ENCODE measurements at regions of chr11 and their contacts with region 1.

Region 1: DNA sequence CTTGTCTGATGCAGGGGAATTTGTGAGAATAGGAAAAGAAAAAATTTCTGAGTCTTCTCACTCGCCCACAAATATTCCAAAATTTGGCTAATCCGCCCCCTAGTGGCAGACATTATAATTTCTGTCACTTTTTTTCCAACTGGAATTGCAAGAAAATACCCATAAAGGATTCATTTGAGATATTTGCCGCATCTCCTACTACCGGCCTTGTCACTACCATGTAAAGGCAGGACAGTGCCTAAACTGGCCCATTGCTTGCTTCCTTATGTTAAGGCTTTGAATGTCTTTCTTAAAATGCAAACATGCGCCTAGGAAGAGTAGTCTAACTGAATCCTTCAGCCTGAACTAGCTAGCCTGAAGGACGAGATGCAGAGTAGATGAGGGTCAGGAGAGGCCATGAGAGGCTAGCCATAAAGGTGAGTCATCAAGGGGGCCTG is 9.3 kb upstream of the CEP295 start:
- DNase-seq: no peak
- ATAC-seq: peak in 1 of 2 donors; percentile 11
- H3K4me3 ChIP-seq: no peak overlapping the region
- H3K27ac ChIP-seq: no peak overlapping the region
- H3K4me1 ChIP-seq: no peaks in the 10 kb centered on the region
- H3K27me3 ChIP-seq: peaks cover 3% of the 10 kb centered on the region

Region 2: DNA sequence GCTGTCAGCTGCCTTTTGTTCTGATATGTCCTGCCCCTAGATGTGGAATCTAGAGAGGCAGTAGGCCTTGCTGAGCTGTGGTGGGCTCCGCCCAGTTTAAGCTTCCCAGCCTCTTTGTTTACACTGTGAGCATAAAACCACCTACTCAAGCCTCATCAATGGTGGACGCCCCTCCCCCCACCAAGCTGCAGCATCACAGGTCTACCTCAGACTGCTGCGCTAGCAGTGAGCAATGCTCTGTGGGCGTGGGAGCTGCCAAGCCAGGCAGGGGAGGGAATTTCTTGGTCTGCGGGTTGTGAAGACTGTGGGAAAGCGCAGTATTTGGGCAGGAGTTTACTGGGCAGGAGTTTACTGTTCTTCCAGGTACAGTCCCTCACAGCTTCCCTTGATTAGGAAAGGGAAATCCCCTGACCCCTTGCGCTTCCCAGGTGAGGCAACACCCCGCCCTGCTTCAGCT is 207.5 kb before region 1 on chr11:
- intact Hi-C with region 1: no loop called
- DNase-seq: no peak
- ATAC-seq: no peak
- H3K4me3 ChIP-seq: no peak overlapping the region
- H3K27ac ChIP-seq: no peak overlapping the region
- H3K4me1 ChIP-seq: no peaks in the 10 kb centered on the region
- H3K27me3 ChIP-seq: no peaks in the 10 kb centered on the region

Region 3: GRCh38 chr11:93548679-93549319 is 103.4 kb before region 1 on chr11:
- intact Hi-C with region 1: loop called in 1 of 4 experiments (anchors 5 kb)
- DNase-seq: no peak
- ATAC-seq: no peak
- H3K4me3 ChIP-seq: no peak overlapping the region
- H3K27ac ChIP-seq: no peak overlapping the region
- H3K4me1 ChIP-seq: no peaks in the 10 kb centered on the region
- H3K27me3 ChIP-seq: no peaks in the 10 kb centered on the region

Region 4: GRCh38 chr11:93857413-93858120 is 205.4 kb after region 1 on chr11:
- intact Hi-C with region 1: no loop called
- DNase-seq: no peak
- ATAC-seq: peak; percentile 70 to 92
- H3K4me3 ChIP-seq: no peak overlapping the region
- H3K27ac ChIP-seq: no peak overlapping the region
- H3K4me1 ChIP-seq: no peaks in the 10 kb centered on the region
- H3K27me3 ChIP-seq: no peaks in the 10 kb centered on the region

Measured in right cardiac atrium (tissue), 5 donors.